ENCODE measurements at regions of chr22 and their contacts with region 1.

Region 1: GRCh38 chr22:19287076-19287724 is 4.3 kb downstream of the CLTCL1 start:
- DNase-seq: no peak
- ATAC-seq: no peak
- H3K4me3 ChIP-seq: no peak overlapping the region
- H3K27ac ChIP-seq: no peak overlapping the region
- H3K4me1 ChIP-seq: no peaks in the 10 kb centered on the region
- H3K27me3 ChIP-seq: no peaks in the 10 kb centered on the region
- CTCF ChIP-seq: no peak
- POLR2A ChIP-seq: no peak

Region 2: DNA sequence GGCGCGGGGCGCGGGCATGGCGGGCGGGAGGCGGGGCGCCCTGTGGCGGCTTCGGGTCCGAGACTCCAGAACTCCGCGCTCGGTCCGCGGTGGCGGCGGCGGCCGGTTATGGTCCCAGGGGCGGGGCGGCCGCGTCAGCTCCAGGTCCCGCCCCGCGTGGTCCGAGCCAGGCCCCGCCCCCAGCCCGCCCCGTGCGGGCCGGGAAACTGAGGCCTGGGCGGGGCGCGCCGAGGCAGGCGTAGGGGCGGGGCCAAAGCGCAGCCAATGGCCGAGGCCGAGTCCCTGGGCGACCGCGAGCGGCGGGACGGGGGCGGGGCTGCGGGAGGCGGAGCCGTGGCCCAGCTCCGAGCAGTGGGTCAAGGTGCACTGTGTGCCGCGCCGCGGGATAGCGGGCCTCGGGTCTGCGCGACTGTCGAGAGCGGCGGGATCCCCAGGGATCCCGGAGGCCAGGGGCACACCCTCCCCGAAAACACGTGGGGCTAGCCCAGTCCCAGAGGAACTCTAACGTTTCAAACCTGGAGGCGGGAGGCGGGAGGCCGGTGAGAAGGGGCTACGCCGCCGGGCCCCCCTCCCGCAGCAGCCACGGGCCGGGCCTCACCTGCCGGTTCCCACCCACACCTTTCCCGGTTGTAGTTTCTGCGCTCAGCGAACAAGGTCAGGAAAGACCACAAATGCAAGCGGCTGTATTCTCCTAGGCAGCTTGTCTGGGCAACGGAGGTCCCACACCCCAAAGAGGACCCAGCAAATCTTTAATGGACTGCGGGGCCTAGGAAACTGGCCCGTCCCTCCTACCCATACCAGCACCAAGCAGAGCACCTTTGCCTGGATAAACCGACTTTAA is 108.3 kb before region 1 on chr22 and contains the start of gene SLC25A1:
- intact Hi-C with region 1: loop called in 1 of 2 experiments (anchors 5 kb)
- DNase-seq: peak; percentile 96 to 97 (median 97)
- ATAC-seq: peak; percentile 78 to 87 (median 84)
- H3K4me3 ChIP-seq: peak within 1 kb of the TSS; percentile 83 to 93 (median 89)
- H3K27ac ChIP-seq: peak within 1 kb of the TSS; percentile 79 to 90 (median 84)
- H3K4me1 ChIP-seq: peaks cover 0 to 46% (median 28%) of the 10 kb centered on the region in 4 donors
- H3K27me3 ChIP-seq: no peaks in the 10 kb centered on the region
- CTCF ChIP-seq: no peak
- POLR2A ChIP-seq: peak; percentile 95
- total RNA-seq, gene SLC25A1: 80.2 to 128 (median 114) TPM

Measured in right lobe of liver (tissue), 6 donors.